Heart right ventricle (tissue), 16 donors: ENCODE measurements at regions of chr22 and their contacts with region 1.

Region 1: GRCh38 chr22:38872172-38872830 is at the start of gene CBX6:
- DNase-seq: peak; percentile 97 to 98
- ATAC-seq: peak; percentile 85 to 91 (median 89)
- H3K4me3 ChIP-seq: peak within 1 kb of the TSS; percentile 67 to 96 (median 84)
- H3K27ac ChIP-seq: peak within 1 kb of the TSS; percentile 94 to 99 (median 98)
- H3K4me1 ChIP-seq: peaks cover 17 to 50% (median 42%) of the 10 kb centered on the region in 9 donors
- H3K27me3 ChIP-seq: no peaks in the 10 kb centered on the region
- CTCF ChIP-seq: no peak
- total RNA-seq, gene CBX6: 28.2 to 49.1 (median 37.3) TPM

Region 2: DNA sequence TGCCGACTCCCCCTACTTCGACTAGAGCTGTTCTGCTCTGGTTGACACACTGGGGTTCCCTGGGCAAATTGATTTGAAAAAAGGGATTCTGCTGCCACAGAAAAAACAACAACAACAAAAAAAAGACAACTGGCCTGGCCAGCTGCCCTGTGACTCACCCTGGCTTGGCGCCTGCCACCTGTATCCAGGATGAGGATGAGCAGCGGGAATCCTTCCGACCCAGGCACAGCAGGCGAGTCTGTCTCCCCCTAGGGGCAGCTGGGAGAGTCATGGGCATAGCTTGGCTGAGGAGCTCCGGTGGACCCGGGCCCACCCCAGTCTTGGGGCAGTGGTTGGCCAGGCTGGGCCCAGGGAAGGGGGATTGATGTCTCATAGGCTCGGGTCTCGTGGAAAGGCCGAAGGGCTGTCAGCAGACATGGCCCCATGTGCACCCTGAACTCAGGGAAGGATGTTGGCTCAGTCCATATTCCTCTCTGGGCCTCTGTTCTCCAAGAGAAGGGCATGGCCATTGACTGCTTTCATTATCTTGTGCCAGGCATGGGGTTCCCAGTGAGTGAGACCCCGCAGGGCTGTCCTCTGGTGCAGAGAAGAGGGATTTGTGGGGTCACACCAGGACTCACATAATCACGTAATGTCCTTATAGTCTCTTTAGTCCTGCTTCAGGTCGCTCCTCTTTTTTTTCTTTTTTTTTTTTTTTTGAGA is 106.1 kb before region 1 on chr22:
- intact Hi-C with region 1: loop called in 3 of 10 experiments (anchors 5 to 10 kb)
- DNase-seq: peak in 1 of 2 donors; percentile 41
- ATAC-seq: peak in 3 of 8 donors; percentile 18 to 52 (median 37)
- H3K4me3 ChIP-seq: no peak overlapping the region
- H3K27ac ChIP-seq: no peak overlapping the region
- H3K4me1 ChIP-seq: peaks cover 0 to 4% (median 0%) of the 10 kb centered on the region in 9 donors
- H3K27me3 ChIP-seq: peaks cover 0 to 7% (median 0%) of the 10 kb centered on the region in 7 donors
- CTCF ChIP-seq: peak; percentile 28 to 74 (median 64)

Region 3: DNA sequence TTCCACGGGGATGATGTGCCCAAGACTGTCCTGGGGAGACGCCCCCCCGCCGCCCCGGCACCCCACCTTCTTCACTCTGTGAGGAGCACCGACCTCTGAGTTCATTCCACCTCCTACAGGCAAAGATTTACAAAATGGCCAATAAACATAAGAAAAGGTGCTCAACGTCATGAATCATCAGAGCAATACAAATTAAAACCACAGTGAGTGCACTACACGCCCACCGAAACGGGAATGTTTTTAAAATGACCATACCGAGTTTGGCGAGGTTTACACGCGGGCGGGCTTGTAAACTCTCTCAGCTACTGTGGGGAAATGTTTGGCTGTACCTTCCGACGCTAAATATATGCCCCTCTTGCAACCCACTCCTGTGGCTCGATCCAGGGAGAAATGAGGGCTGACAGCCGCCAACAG is 36.4 kb before region 1 on chr22:
- intact Hi-C with region 1: no loop called
- DNase-seq: no peak
- ATAC-seq: no peak
- H3K4me3 ChIP-seq: no peak overlapping the region
- H3K27ac ChIP-seq: no peak overlapping the region
- H3K4me1 ChIP-seq: no peaks in the 10 kb centered on the region
- H3K27me3 ChIP-seq: peaks cover 0 to 8% (median 0%) of the 10 kb centered on the region in 7 donors
- CTCF ChIP-seq: no peak

Region 4: GRCh38 chr22:38927033-38927781 is 54.9 kb after region 1 on chr22:
- intact Hi-C with region 1: loop called in 6 of 10 experiments (anchors 1 to 10 kb)
- DNase-seq: peak; percentile 65 to 77
- ATAC-seq: peak; percentile 70 to 88 (median 76)
- H3K4me3 ChIP-seq: peak overlapping the region in 9 of 10 donors; percentile 2 to 45 (median 31)
- H3K27ac ChIP-seq: peak overlapping the region in 9 of 10 donors; percentile 36 to 76 (median 58)
- H3K4me1 ChIP-seq: peaks cover 4 to 34% (median 25%) of the 10 kb centered on the region in 9 donors
- H3K27me3 ChIP-seq: peaks cover 0 to 46% (median 7%) of the 10 kb centered on the region in 7 donors
- CTCF ChIP-seq: peak in 8 of 9 donors; percentile 26 to 85 (median 70)

Region 5: DNA sequence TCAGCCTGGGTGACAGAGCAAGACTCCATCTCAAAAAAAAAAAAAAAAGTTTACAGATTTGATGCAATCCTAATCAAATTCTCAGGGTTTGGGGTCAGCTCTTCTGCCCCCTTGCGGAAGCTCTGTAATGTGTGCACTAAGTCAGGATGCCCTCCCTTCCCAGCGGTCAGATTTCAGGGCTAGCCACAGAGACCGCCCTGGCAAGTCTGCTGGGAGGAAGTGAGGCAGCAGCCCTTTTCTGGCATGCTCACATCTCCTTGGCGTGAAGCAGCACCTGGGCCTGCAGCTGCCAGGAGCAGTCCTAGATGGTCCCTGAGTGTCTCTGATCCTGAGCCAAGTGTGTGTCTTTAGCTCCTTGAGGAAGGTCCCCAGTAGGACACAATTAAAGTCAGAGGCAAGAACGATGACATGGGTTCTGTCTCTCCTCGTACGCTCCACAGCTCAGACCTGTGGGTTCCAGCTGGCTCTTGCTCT is 130.9 kb after region 1 on chr22:
- intact Hi-C with region 1: loop called in 9 of 10 experiments (anchors 1 to 10 kb)
- DNase-seq: peak; percentile 54 to 69
- ATAC-seq: peak; percentile 83 to 94 (median 92)
- H3K4me3 ChIP-seq: no peak overlapping the region
- H3K27ac ChIP-seq: no peak overlapping the region
- H3K4me1 ChIP-seq: peaks cover 0 to 9% (median 7%) of the 10 kb centered on the region in 9 donors
- H3K27me3 ChIP-seq: peaks cover 0 to 11% (median 0%) of the 10 kb centered on the region in 7 donors
- CTCF ChIP-seq: peak; percentile 59 to 88 (median 79)

Region 6: GRCh38 chr22:39123751-39124601 is 251.7 kb after region 1 on chr22:
- intact Hi-C with region 1: loop called in 7 of 10 experiments (anchors 2 to 10 kb)
- DNase-seq: no peak
- ATAC-seq: peak in 3 of 8 donors; percentile 23 to 35 (median 32)
- H3K4me3 ChIP-seq: no peak overlapping the region
- H3K27ac ChIP-seq: no peak overlapping the region
- H3K4me1 ChIP-seq: peaks cover 0 to 2% (median 0%) of the 10 kb centered on the region in 9 donors
- H3K27me3 ChIP-seq: no peaks in the 10 kb centered on the region
- CTCF ChIP-seq: no peak

Region 7: GRCh38 chr22:39319270-39320022 is 447.1 kb after region 1 on chr22 and contains the start of gene RPL3:
- intact Hi-C with region 1: loop called in 3 of 10 experiments (anchors 2 to 10 kb)
- DNase-seq: peak; percentile 97 to 98
- ATAC-seq: peak; percentile 87 to 95 (median 93)
- H3K4me3 ChIP-seq: peak within 1 kb of the TSS; percentile 59 to 83 (median 76)
- H3K27ac ChIP-seq: peak within 1 kb of the TSS; percentile 91 to 99 (median 98)
- H3K4me1 ChIP-seq: peaks cover 32 to 52% (median 47%) of the 10 kb centered on the region in 9 donors
- H3K27me3 ChIP-seq: no peaks in the 10 kb centered on the region
- CTCF ChIP-seq: peak in 7 of 9 donors; percentile 12 to 45 (median 29)
- total RNA-seq, gene RPL3: 215 to 604 (median 286) TPM